Spleen (tissue), 13 donors: ENCODE measurements at regions of chr12 and their contacts with region 1.

Region 1: GRCh38 chr12:132414634-132415326 is 75.2 kb upstream of the FBRSL1 start:
- DNase-seq: peak; percentile 92
- H3K4me3 ChIP-seq: peak overlapping the region in 1 of 8 donors; percentile 28
- H3K27ac ChIP-seq: no peak overlapping the region
- H3K4me1 ChIP-seq: peaks cover 9 to 23% (median 16%) of the 10 kb centered on the region in 6 donors
- H3K27me3 ChIP-seq: peaks cover 0 to 34% (median 9%) of the 10 kb centered on the region in 7 donors
- CTCF ChIP-seq: peak; percentile 88 to 99 (median 94)
- POLR2A ChIP-seq: no peak

Region 2: DNA sequence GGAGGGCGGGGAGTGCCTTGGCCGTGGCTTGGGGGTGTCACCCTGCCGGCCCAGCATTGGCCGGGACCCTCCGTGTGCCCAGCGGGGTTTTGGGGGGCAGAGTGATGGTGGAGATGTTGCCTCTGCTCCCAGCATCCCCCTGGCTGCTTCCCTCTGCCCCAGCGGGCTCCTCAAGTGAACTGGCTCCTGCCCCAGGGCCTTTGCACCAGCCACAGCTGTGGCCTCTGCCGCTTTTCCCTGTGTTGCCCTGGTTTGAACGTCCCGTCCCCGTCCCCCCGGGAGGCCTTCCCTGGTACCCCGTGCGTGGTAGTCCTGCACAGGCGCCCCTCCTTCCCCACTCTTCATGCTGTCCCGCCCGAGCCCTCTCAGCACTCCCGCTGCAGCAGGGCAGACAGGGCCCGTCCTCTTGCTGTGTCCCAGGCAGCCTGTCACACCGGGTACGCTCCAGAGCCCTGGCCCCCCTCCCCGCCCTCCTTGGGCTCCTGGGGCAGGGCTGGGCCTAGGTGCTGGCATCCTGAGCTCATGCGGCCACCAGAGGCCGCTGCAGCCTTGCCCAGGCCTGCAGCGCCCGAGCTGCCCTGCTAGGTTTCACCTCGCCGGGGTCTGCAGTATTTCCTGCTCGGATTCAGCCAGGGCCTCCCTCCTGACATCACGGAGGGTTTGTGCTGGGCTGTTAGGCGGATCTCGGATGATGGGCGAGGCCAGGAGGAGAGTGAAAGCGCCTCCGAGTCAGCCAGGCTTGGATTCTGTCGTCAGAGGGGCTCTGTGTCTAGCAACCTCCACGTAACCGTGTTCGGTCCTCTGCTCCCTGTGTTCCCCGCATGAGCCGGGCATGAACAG is 261.1 kb before region 1 on chr12:
- intact Hi-C with region 1: loop called (anchors 10 kb)
- DNase-seq: peak; percentile 91
- H3K4me3 ChIP-seq: peak overlapping the region in 6 of 8 donors; percentile 6 to 48 (median 13)
- H3K27ac ChIP-seq: no peak overlapping the region
- H3K4me1 ChIP-seq: peaks cover 7 to 17% (median 12%) of the 10 kb centered on the region in 6 donors
- H3K27me3 ChIP-seq: no peaks in the 10 kb centered on the region
- CTCF ChIP-seq: peak; percentile 79 to 97 (median 94)
- POLR2A ChIP-seq: no peak

Region 3: DNA sequence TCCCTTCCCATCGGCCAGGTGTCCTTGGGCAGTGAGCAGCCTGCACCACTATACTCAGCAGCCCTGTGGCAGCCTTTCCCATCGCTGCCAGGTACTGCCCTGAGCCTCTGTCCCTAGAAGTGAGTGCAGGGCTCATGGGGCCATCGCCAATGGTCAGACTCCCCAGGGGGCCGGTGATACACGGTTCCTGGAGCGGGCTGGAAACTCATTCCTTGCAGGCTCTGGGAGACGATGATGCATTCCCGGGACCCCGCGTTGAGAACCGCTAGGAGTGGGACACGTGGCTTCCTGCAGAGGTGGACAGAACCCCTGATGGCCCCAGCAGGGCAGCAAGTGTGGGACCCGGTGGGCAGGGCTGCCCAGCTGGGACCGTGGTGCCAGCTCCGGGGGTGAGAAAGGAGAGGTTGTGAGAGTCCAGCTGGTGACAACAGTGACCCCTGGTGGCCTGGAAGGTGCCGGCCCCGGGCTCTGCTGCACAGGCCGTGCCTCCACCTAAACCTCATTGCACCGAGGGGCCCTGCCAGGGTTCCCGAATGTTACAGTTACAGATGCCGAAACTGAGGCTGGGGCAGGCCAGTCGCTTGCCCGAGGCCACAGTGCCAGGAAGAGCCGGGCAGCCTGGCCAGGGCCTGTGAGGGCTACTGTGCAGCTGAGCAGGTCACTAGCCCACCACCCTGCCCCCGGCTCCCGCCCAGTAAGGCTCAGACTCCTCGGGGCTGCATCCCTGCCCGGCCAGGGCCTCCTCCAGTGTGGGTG is 109.0 kb after region 1 on chr12:
- intact Hi-C with region 1: loop called (anchors 2 kb)
- DNase-seq: peak; percentile 94
- H3K4me3 ChIP-seq: no peak overlapping the region
- H3K27ac ChIP-seq: no peak overlapping the region
- H3K4me1 ChIP-seq: peaks cover 4 to 53% (median 32%) of the 10 kb centered on the region in 6 donors
- H3K27me3 ChIP-seq: no peaks in the 10 kb centered on the region
- CTCF ChIP-seq: peak; percentile 70 to 97 (median 93)
- POLR2A ChIP-seq: no peak

Region 4: GRCh38 chr12:132614861-132615578 is 200.2 kb after region 1 on chr12:
- intact Hi-C with region 1: loop called (anchors 5 kb)
- DNase-seq: peak; percentile 92
- H3K4me3 ChIP-seq: no peak overlapping the region
- H3K27ac ChIP-seq: no peak overlapping the region
- H3K4me1 ChIP-seq: peaks cover 1 to 37% (median 17%) of the 10 kb centered on the region in 6 donors
- H3K27me3 ChIP-seq: peaks cover 0 to 71% (median 46%) of the 10 kb centered on the region in 7 donors
- CTCF ChIP-seq: peak; percentile 41 to 91 (median 83)
- POLR2A ChIP-seq: no peak